T-cell (primary cell): ENCODE measurements at regions of chr3 and their contacts with region 1.

Region 1: DNA sequence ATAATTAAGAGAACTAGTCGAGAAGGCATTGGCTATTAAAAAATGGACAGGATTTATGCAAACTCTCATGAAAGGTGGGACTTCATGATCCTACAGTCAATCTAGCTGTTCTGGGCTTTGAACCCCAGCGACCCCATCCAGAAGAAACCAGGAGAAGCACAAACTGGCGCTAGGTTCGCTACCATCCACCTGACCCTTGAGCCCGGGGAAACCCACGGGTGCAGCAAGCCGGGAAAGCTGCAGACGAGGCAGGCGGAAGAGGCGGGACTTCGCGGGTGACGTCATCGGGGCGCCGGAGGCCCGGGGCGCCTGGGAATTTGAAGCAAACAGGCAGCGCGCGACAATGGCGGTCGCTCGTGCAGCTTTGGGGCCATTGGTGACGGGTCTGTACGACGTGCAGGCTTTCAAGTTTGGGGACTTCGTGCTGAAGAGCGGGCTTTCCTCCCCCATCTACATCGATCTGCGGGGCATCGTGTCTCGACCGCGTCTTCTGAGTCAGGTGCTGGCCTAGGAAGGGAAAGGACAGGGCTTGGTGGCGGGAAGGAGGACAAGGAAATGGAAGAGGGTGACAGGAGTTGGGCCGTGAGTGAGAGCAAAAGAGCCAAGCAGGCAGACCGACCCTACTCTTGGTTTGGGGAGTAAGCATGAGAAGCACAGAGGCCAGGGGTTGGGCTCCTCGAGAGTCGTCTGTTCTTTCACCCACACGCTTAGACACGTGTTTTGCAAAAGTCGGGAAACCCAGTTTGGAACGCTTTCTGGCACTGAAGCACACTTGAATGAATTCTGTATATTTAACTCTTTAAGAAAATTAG is at the start of gene UMPS:
- DNase-seq: peak; percentile 81 to 95 (median 91)
- ATAC-seq: peak; percentile 98 to 99 (median 98)
- H3K4me3 ChIP-seq: peak within 1 kb of the TSS; percentile 80 to 100
- H3K4me3 Mint-ChIP-seq: peak within 1 kb of the TSS; percentile 96 to 99 (median 96)
- H3K27ac ChIP-seq: peak within 1 kb of the TSS; percentile 83
- H3K27ac Mint-ChIP-seq: peak within 1 kb of the TSS; percentile 92 to 97
- H3K4me1 ChIP-seq: peaks cover 18% of the 10 kb centered on the region in 2 experiments
- H3K4me1 Mint-ChIP-seq: peaks cover 32 to 44% (median 41%) of the 10 kb centered on the region in 3 donors
- H3K27me3 ChIP-seq: peaks cover 2 to 9% of the 10 kb centered on the region in 2 experiments
- H3K27me3 Mint-ChIP-seq: peaks cover 13 to 18% of the 10 kb centered on the region in 2 donors
- total RNA-seq, gene UMPS: 14.9 to 29.6 (median 21.1) TPM

Region 2: GRCh38 chr3:124529826-124530571 is 200.3 kb before region 1 on chr3:
- CTCF ChIA-PET with region 1: no interaction called
- POLR2A ChIA-PET with region 1: no interaction called
- DNase-seq: no peak
- ATAC-seq: no peak
- H3K4me3 ChIP-seq: no peak overlapping the region
- H3K4me3 Mint-ChIP-seq: no peak overlapping the region
- H3K27ac ChIP-seq: no peak overlapping the region
- H3K27ac Mint-ChIP-seq: no peak overlapping the region
- H3K4me1 ChIP-seq: no peaks in the 10 kb centered on the region
- H3K4me1 Mint-ChIP-seq: no peaks in the 10 kb centered on the region
- H3K27me3 ChIP-seq: peaks cover 2 to 4% of the 10 kb centered on the region in 2 experiments
- H3K27me3 Mint-ChIP-seq: peaks cover 19 to 29% of the 10 kb centered on the region in 2 donors

Region 3: GRCh38 chr3:125186261-125186787 is 456.0 kb after region 1 on chr3:
- CTCF ChIA-PET with region 1: no interaction called
- POLR2A ChIA-PET with region 1: interaction called in 1 of 2 experiments, 10 read pairs
- DNase-seq: no peak
- ATAC-seq: no peak
- H3K4me3 ChIP-seq: no peak overlapping the region
- H3K4me3 Mint-ChIP-seq: no peak overlapping the region
- H3K27ac ChIP-seq: no peak overlapping the region
- H3K27ac Mint-ChIP-seq: no peak overlapping the region
- H3K4me1 ChIP-seq: no peaks in the 10 kb centered on the region
- H3K4me1 Mint-ChIP-seq: peaks cover 0 to 9% (median 3%) of the 10 kb centered on the region in 3 donors
- H3K27me3 ChIP-seq: peaks cover 0 to 4% of the 10 kb centered on the region in 2 experiments
- H3K27me3 Mint-ChIP-seq: no peaks in the 10 kb centered on the region